ENCODE measurements at regions of chr16 and their contacts with region 1.

Region 1: DNA sequence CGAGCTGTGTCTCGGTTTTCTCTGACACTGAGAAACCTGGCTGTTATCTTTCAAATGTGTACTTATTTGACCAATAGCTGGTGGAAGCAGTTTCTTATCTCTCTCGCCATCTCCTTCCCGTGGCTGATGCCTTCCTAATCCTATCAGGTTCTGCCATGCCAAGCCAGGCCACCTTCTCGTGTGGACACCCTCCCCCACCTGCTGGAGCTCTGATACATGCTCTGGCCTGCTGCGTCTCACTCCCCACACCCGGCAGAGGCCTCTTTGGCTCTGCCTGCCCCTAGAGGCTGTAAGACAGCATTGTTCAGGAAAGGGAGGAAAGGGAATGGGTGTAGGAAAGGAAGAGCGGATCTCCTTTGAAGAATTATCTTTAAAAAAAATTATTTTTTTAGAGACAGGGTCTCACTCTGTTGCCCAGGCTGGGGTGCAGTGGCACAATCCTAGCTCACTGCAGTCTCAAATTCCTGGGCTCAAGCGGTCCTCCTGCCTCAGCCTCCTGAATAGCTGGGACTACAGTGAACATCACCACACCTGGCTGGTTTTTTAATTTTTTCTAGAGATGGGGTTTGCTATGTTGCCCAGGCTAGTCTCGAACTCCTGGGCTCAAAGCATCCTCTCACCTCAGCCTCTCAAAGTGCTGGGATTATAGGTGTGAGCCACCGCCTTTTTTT is 7.5 kb upstream of the ARMC5 start:
- DNase-seq: peak; percentile 61 to 80
- ATAC-seq: peak; percentile 61 to 69 (median 64)
- H3K4me3 ChIP-seq: no peak overlapping the region
- H3K27ac ChIP-seq: peak overlapping the region; percentile 100
- H3K4me1 ChIP-seq: peaks cover 53% of the 10 kb centered on the region
- H3K27me3 ChIP-seq: no peaks in the 10 kb centered on the region
- CTCF ChIP-seq: peak; percentile 49

Region 2: GRCh38 chr16:31108035-31108793 is 343.6 kb before region 1 on chr16 and contains the start of gene BCKDK:
- intact Hi-C with region 1: loop called in 1 of 2 experiments (anchors 5 kb)
- DNase-seq: peak; percentile 85 to 86
- ATAC-seq: peak; percentile 62 to 74 (median 69)
- H3K4me3 ChIP-seq: peak within 1 kb of the TSS; percentile 86
- H3K27ac ChIP-seq: peak within 1 kb of the TSS; percentile 90
- H3K4me1 ChIP-seq: peaks cover 32% of the 10 kb centered on the region
- H3K27me3 ChIP-seq: no peaks in the 10 kb centered on the region
- CTCF ChIP-seq: no peak
- total RNA-seq, gene BCKDK: 36.7 to 72.8 (median 55.4) TPM